ENCODE measurements at regions of chr12 and their contacts with region 1.

Region 1: GRCh38 chr12:93773122-93773871 is 96.1 kb downstream of the CRADD start:
- DNase-seq: peak; percentile 87
- H3K4me3 Mint-ChIP-seq: peak overlapping the region; percentile 71
- H3K27ac Mint-ChIP-seq: peak overlapping the region; percentile 86
- H3K4me1 Mint-ChIP-seq: peaks cover 39% of the 10 kb centered on the region
- H3K27me3 Mint-ChIP-seq: no peaks in the 10 kb centered on the region

Region 2: DNA sequence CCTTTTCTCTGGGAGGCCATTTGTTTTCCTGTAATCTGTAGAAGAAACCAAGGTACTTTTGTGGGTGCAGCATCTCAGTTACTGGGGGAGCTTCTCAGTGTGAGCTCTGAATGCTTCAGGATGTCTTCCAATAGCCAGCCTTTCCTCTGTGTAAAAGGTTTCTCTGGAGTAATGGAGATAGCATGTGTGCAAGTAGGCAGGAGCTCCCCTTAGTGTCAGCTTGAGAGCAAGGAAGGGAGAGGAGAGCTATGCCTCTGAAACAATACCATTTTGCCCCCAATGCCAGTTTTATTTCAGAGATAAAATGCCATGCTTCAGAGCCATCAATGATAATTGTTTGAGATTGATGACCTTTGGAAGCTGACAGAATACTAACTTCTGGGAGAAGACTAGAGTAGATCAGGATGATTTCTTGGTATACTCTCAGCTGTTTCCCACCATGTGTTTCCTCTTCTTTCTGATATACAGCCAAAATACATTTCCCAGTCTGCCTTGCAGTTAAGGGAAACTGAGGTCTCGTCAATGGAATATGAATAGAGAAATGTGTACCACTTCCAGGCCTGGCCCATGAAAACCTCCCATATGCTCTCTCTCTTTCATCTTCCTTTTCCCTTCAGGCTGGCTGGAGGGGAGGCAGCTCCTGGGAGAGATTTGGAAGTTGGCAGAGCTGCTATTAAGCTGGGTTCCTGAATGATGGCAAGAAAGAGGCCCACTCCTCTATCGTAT is 29.6 kb after region 1 on chr12:
- CTCF ChIA-PET with region 1: no interaction called
- intact Hi-C with region 1: loop called (anchors 2 kb)
- DNase-seq: no peak
- H3K4me3 Mint-ChIP-seq: no peak overlapping the region
- H3K27ac Mint-ChIP-seq: no peak overlapping the region
- H3K4me1 Mint-ChIP-seq: peaks cover 56% of the 10 kb centered on the region
- H3K27me3 Mint-ChIP-seq: no peaks in the 10 kb centered on the region